ENCODE measurements at regions of chr2 and their contacts with region 1.

Region 1: DNA sequence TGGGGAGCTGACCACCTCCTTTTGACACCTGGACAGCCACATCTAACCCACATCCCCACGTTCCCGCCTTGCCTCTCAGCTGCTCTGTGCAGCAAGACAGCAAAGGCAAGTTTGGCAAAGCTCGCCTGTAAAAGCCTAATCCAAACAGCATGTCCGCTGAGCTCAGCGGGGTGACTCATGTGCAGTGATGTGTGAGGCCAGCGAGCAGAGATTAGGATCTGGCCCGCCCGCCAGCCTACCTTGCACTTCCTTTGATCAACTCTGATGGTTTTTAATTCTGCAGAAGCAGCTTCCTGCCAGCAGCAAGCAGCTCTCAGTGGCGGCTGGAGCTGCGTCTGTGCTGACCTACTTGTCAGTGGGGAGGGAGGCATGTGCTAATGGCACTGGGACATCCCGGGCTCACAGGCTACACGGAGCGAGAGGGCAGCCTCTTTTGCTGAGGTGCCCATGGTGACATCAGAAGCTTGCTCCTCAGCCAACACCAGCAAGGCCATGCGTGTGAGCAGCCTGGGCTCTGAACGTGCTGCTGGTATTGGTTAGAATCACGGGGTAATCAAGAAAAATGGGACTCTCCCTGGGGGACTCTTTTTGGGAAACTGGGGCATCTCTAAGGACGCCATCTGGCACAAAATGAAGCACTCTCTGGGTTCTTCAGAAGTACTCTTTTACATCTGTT is 36.0 kb upstream of the EML4 start:
- DNase-seq: peak; percentile 90
- H3K4me3 Mint-ChIP-seq: peak overlapping the region; percentile 67
- H3K27ac Mint-ChIP-seq: peak overlapping the region; percentile 93
- H3K4me1 Mint-ChIP-seq: peaks cover 75% of the 10 kb centered on the region
- H3K27me3 Mint-ChIP-seq: no peaks in the 10 kb centered on the region

Region 2: GRCh38 chr2:42086500-42086953 is 46.6 kb before region 1 on chr2:
- intact Hi-C with region 1: no loop called
- DNase-seq: no peak
- H3K4me3 Mint-ChIP-seq: no peak overlapping the region
- H3K27ac Mint-ChIP-seq: no peak overlapping the region
- H3K4me1 Mint-ChIP-seq: peaks cover 9% of the 10 kb centered on the region
- H3K27me3 Mint-ChIP-seq: peaks cover 26% of the 10 kb centered on the region

Region 3: GRCh38 chr2:42102024-42102590 is 31.0 kb before region 1 on chr2:
- intact Hi-C with region 1: loop called (anchors 1 kb)
- DNase-seq: peak; percentile 84
- H3K4me3 Mint-ChIP-seq: peak overlapping the region; percentile 67
- H3K27ac Mint-ChIP-seq: peak overlapping the region; percentile 92
- H3K4me1 Mint-ChIP-seq: peaks cover 60% of the 10 kb centered on the region
- H3K27me3 Mint-ChIP-seq: no peaks in the 10 kb centered on the region

Region 4: GRCh38 chr2:42117923-42118753 is 15.0 kb before region 1 on chr2:
- intact Hi-C with region 1: loop called (anchors 2 kb)
- DNase-seq: no peak
- H3K4me3 Mint-ChIP-seq: no peak overlapping the region
- H3K27ac Mint-ChIP-seq: no peak overlapping the region
- H3K4me1 Mint-ChIP-seq: peaks cover 27% of the 10 kb centered on the region
- H3K27me3 Mint-ChIP-seq: peaks cover 9% of the 10 kb centered on the region

Region 5: DNA sequence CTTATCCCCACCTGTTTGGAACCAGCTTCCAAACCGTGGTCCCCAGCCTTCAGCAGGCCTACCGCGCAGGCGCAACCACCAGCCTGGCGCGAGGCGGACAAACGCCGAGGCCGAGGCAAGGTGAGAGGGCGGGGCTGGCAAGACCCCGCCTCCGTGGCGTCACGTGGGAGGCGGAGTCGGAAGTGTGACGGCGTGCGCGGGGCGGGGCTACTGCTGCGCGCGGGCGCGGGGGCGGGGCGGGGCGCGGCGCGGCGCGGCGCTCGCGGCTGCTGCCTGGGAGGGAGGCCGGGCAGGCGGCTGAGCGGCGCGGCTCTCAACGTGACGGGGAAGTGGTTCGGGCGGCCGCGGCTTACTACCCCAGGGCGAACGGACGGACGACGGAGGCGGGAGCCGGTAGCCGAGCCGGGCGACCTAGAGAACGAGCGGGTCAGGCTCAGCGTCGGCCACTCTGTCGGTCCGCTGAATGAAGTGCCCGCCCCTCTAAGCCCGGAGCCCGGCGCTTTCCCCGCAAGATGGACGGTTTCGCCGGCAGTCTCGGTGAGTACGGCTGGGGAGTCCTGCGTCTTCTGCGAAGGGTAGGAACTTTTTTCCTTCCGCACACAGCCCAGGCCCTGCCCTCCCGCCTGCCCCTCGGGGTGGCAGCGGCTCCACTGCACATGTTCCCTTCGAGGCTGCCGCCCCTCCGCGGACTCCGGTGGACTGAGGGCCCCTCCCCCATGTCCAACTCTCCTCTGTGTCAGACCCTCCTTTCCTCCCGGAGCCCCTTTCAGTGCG is 36.2 kb after region 1 on chr2 and contains the start of gene EML4:
- intact Hi-C with region 1: loop called (anchors 1 kb)
- DNase-seq: peak; percentile 87
- H3K4me3 Mint-ChIP-seq: no peak within 1 kb of the TSS
- H3K27ac Mint-ChIP-seq: no peak within 1 kb of the TSS
- H3K4me1 Mint-ChIP-seq: peaks cover 17% of the 10 kb centered on the region
- H3K27me3 Mint-ChIP-seq: peaks cover 10% of the 10 kb centered on the region
- total RNA-seq, gene EML4: 43.0 and 45.2 TPM in 2 replicates

Region 6: DNA sequence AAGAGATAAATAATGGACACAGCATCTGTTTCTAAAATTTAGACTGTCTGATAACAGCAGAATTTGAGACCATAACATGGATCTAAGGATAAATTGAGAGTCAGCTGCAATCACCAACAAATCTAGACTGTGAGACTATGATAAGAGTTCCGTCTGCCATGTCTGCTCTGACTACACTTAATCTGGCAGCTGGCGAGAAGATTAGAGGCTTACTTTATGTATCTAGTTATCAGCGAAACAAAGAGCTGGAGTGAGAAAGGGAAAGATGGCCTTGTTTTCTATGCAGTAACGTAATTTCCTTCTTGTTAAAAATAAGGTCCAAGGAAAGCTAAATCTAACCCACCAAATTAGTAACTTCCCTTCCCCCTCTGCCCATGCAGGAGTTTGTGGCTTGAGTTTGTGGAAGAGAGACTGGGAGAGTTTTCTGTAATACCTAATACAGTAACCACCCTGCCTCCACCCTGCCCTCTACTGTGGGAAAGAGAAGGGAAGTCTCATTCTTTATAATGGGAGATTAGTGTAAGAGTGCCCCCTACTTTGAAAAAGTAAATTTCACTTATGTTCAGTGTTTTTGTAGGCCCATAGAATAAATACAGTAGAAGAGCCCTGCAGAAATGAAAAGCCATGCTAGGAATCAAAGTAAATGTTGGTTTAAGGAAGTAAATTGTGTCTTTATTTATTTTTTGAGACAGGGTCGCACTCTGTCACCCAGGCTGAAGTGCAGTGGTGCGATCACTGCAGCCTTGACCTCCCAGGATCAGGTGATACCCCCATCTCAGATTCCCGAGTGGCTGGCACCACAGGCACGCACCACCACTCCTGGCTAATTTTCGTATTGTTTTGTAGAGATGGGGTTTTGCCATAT is 63.5 kb after region 1 on chr2:
- intact Hi-C with region 1: loop called (anchors 10 kb)
- DNase-seq: no peak
- H3K4me3 Mint-ChIP-seq: no peak overlapping the region
- H3K27ac Mint-ChIP-seq: no peak overlapping the region
- H3K4me1 Mint-ChIP-seq: peaks cover 38% of the 10 kb centered on the region
- H3K27me3 Mint-ChIP-seq: no peaks in the 10 kb centered on the region

Region 7: DNA sequence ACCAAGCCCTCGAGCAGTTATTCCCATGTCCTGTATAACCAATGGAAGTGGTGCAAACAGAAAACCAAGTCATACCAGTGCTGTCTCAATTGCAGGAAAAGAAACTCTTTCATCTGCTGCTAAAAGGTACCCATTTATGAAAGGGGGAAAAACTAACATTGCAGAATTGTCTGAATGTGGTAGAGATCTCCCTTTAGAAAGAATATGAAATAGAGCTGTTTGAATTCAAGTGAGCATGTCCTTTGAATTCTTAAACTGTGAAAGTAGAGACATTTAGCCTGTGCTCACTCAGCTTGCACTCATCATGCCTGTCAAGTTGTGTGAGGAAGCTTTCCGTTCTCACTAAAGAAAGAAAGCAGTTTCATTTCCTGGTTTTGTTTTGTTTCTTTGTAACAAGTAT is 123.4 kb after region 1 on chr2:
- intact Hi-C with region 1: no loop called
- DNase-seq: no peak
- H3K4me3 Mint-ChIP-seq: peak overlapping the region; percentile 33
- H3K27ac Mint-ChIP-seq: peak overlapping the region; percentile 61
- H3K4me1 Mint-ChIP-seq: peaks cover 37% of the 10 kb centered on the region
- H3K27me3 Mint-ChIP-seq: no peaks in the 10 kb centered on the region

Measured in activated T-helper 2 cell treated with anti-CD3 and anti-CD28 coated beads, Interferon-gamma antibody, Interleukin-2, Interleukin-4, amounts not matched to agents 10 μg/mL and 5 μg/mL and 100 μg/mL, durations not matched to agents 14 hours and 24 hours and 36 hours (primary cell).